ENCODE measurements at regions of chr3 and their contacts with region 1.

Region 1: GRCh38 chr3:189001559-189001958 is 170.2 kb upstream of the TPRG1 start:
- DNase-seq: no peak
- H3K4me3 ChIP-seq: no peak overlapping the region
- H3K27ac ChIP-seq: no peak overlapping the region
- H3K4me1 ChIP-seq: no peaks in the 10 kb centered on the region
- H3K27me3 ChIP-seq: no peaks in the 10 kb centered on the region
- CTCF ChIP-seq: no peak
- POLR2A ChIP-seq: no peak

Region 2: GRCh38 chr3:187044206-187044605 is 1957.4 kb before region 1 on chr3:
- intact Hi-C with region 1: no loop called
- DNase-seq: no peak
- H3K4me3 ChIP-seq: no peak overlapping the region
- H3K27ac ChIP-seq: peak overlapping the region in 1 of 2 donors; percentile 50
- H3K4me1 ChIP-seq: no peaks in the 10 kb centered on the region
- H3K27me3 ChIP-seq: no peaks in the 10 kb centered on the region
- CTCF ChIP-seq: no peak
- POLR2A ChIP-seq: no peak

Region 3: GRCh38 chr3:187889601-187890404 is 1111.8 kb before region 1 on chr3:
- intact Hi-C with region 1: no loop called
- DNase-seq: no peak
- H3K4me3 ChIP-seq: no peak overlapping the region
- H3K27ac ChIP-seq: peak overlapping the region in 1 of 2 donors; percentile 58
- H3K4me1 ChIP-seq: no peaks in the 10 kb centered on the region
- H3K27me3 ChIP-seq: no peaks in the 10 kb centered on the region
- CTCF ChIP-seq: no peak
- POLR2A ChIP-seq: no peak

Region 4: GRCh38 chr3:189167027-189167766 is 165.6 kb after region 1 on chr3:
- intact Hi-C with region 1: no loop called
- DNase-seq: no peak
- H3K4me3 ChIP-seq: no peak overlapping the region
- H3K27ac ChIP-seq: no peak overlapping the region
- H3K4me1 ChIP-seq: no peaks in the 10 kb centered on the region
- H3K27me3 ChIP-seq: no peaks in the 10 kb centered on the region
- CTCF ChIP-seq: no peak
- POLR2A ChIP-seq: no peak

Region 5: DNA sequence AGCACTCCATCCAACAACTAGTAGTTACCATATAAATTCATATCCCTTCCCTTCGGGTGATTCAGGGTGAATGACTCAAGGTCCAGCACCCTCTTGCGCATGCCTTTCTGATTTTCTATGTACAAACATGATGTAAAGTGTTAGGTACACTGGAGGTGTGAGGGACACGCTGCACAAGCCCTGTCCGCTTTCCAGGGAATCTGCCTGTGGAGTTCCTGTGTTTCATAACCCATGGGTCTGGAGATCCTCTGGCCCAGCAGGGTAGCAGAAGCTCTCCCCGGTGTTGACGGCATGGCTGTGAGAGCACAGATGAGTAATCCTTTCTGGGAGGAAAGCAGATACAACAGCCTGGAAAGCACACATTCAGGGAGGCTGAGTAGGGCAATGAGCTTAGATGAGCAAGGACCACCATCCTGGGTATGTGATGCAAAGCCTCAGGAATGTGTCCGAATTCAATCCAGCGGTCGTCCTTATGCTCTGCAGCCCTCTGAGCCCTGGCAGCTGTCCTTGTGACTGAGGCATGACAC is 486.7 kb after region 1 on chr3:
- intact Hi-C with region 1: loop called (anchors 10 kb)
- DNase-seq: no peak
- H3K4me3 ChIP-seq: no peak overlapping the region
- H3K27ac ChIP-seq: no peak overlapping the region
- H3K4me1 ChIP-seq: no peaks in the 10 kb centered on the region
- H3K27me3 ChIP-seq: no peaks in the 10 kb centered on the region
- CTCF ChIP-seq: no peak
- POLR2A ChIP-seq: no peak

Measured in breast epithelium (tissue), 4 donors.